ENCODE measurements at regions of chr18 and their contacts with region 1.

Region 1: DNA sequence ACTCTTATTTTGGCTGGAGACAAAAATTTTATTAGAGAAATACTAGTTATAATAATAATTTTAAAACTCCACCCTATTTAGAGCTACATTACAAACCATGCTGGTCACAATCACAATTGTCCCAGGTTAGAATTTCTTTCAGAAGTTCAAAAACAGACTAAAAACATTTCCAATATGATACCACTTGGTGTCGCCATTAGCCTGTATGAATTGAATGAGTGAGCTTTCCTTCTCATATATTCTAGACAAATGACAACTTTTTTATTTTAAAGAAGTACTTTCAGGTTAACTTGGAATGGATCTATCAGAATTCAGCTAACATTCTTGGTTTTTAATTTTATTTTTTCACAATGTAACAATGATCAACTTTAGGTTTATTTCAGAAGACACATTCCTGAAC is 48.0 kb downstream of the SERPINB8 start:
- DNase-seq: no peak
- H3K4me3 Mint-ChIP-seq: no peak overlapping the region
- H3K27ac Mint-ChIP-seq: no peak overlapping the region
- H3K4me1 Mint-ChIP-seq: no peaks in the 10 kb centered on the region
- H3K27me3 Mint-ChIP-seq: no peaks in the 10 kb centered on the region

Region 2: DNA sequence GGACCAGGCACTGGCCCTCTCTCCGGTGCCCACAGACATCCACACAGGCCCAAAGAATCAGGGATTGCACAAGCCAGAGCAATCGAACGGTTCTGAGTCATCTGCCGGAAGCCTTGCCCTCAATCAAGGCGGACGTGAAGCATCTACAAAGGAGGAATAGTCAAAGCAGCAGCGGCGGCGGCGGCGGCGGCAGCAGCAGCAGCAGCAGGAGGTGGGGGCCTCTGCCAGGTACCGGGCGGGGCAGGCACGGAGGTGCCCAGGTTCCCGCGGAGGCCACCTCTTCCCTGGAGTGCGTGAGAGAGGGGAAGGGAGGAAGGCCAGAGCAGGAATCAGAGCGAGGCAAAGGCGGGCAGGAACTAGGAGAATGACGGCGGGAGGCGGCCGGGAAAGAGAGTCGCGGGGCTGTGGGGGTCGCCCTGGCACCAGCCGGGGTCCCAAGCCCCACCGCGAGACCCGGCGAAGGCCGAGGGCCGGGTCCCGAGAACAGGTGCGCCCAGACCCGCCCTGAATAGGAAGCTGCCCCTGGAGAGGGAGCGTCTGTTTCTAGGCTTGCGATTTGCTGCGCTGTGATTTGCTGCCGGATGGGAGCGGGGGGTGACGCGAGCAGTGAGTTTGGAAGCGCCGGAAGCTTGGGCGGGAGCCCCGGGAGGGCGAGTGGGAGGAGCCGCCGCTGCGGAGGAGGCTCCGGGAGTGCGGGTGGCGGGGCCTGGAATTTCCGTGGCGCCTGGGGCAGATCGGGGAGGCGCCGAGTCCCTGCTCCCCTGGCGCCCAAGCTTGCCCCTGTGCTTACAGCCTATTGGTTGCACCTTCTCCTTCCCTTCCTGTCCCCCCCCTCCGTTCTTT is 47.7 kb before region 1 on chr18 and contains the start of gene SERPINB8:
- CTCF ChIA-PET with region 1: no interaction called
- POLR2A ChIA-PET with region 1: no interaction called
- intact Hi-C with region 1: no loop called
- DNase-seq: peak; percentile 91
- H3K4me3 Mint-ChIP-seq: peak within 1 kb of the TSS; percentile 88
- H3K27ac Mint-ChIP-seq: peak within 1 kb of the TSS; percentile 95
- H3K4me1 Mint-ChIP-seq: peaks cover 41% of the 10 kb centered on the region
- H3K27me3 Mint-ChIP-seq: no peaks in the 10 kb centered on the region
- total RNA-seq, gene SERPINB8: 14.6 to 14.9 TPM

Region 3: GRCh38 chr18:64409511-64409910 is 391.6 kb after region 1 on chr18:
- CTCF ChIA-PET with region 1: no interaction called
- POLR2A ChIA-PET with region 1: no interaction called
- intact Hi-C with region 1: loop called (anchors 1 kb)
- DNase-seq: no peak
- H3K4me3 Mint-ChIP-seq: no peak overlapping the region
- H3K27ac Mint-ChIP-seq: no peak overlapping the region
- H3K4me1 Mint-ChIP-seq: no peaks in the 10 kb centered on the region
- H3K27me3 Mint-ChIP-seq: no peaks in the 10 kb centered on the region

Measured in activated CD4-positive, alpha-beta memory T cell treated with anti-CD3 and anti-CD28 coated beads for 36 hours (primary cell).